ENCODE measurements at regions of chr1 and their contacts with region 1.

Region 1: DNA sequence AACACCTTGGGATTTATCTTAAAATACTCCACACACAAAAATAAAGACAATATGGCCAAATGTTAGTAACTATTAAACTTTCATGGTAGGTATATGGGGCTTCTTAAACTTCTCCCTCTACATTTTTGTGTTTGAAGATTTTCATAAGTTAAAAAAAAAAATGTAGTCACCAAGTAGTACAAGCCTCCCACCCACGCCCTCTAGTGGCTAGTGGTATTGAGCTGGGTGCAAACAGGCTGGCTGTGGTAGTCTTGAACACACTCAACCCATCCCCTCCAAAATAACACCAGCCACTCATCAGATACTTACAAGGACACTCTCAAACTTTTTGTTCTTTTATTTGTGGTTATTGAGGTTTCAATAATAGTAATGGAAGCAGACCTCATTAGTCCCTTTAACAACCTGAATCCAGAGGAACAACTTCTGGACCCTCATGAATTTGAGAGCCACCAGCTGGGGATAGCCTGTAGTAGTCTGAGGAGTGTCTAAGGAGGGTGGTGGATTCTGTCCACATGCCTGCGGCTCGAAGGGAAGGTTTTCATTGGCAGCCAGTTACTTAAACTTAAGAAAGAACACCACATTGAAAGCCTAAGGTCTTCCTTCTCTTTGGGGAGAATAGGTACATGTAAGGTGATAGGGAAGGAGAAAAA is 15.6 kb downstream of the RD3 start:
- DNase-seq: peak; percentile 39
- ATAC-seq: peak; percentile 72
- H3K4me3 Mint-ChIP-seq: no peak overlapping the region
- H3K27ac Mint-ChIP-seq: no peak overlapping the region
- H3K4me1 Mint-ChIP-seq: peaks cover 2% of the 10 kb centered on the region
- H3K27me3 Mint-ChIP-seq: peaks cover 27% of the 10 kb centered on the region
- CTCF ChIP-seq: peak; percentile 56

Region 2: GRCh38 chr1:210448297-210448892 is 1027.9 kb before region 1 on chr1:
- CTCF ChIA-PET with region 1: no interaction called
- POLR2A ChIA-PET with region 1: no interaction called
- intact Hi-C with region 1: loop called (anchors 1 kb)
- DNase-seq: no peak
- ATAC-seq: no peak
- H3K4me3 Mint-ChIP-seq: no peak overlapping the region
- H3K27ac Mint-ChIP-seq: no peak overlapping the region
- H3K4me1 Mint-ChIP-seq: peaks cover 7% of the 10 kb centered on the region
- H3K27me3 Mint-ChIP-seq: no peaks in the 10 kb centered on the region
- CTCF ChIP-seq: no peak

Region 3: DNA sequence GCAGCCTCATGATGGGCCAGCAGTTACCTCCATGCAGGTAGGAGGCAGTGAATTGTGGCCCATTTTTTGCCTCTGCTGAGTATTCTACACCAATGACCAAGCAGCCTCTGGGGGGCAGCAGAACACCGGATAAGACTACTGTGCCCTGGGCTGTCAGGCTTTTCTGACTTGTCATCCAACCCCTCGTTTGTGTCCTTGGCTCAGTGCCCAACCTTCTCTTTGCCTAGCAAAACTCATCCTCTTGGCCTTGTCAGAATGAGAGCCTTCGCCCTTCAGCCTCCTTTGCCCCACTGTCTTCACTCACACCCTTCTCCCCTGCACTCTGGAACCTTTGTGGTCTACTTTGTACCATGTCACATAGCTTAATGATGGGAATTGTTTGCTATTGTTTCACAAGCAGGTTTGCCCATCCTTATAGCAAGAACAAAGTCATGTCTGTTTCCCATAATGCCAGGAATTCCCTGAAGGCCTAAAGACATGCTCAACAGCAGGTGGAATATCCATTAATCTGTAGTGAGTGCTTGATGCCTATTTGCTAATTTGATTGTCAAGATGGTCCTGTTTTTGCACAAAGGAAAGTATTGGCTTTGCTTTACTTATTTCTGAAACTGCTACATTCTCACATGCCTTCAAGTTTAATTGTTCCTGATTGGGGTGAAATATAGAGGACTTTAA is 891.7 kb before region 1 on chr1:
- CTCF ChIA-PET with region 1: interaction called, 4 read pairs
- POLR2A ChIA-PET with region 1: no interaction called
- intact Hi-C with region 1: loop called (anchors 1 kb)
- DNase-seq: peak; percentile 34
- ATAC-seq: peak; percentile 37
- H3K4me3 Mint-ChIP-seq: no peak overlapping the region
- H3K27ac Mint-ChIP-seq: no peak overlapping the region
- H3K4me1 Mint-ChIP-seq: peaks cover 10% of the 10 kb centered on the region
- H3K27me3 Mint-ChIP-seq: no peaks in the 10 kb centered on the region
- CTCF ChIP-seq: no peak

Region 4: DNA sequence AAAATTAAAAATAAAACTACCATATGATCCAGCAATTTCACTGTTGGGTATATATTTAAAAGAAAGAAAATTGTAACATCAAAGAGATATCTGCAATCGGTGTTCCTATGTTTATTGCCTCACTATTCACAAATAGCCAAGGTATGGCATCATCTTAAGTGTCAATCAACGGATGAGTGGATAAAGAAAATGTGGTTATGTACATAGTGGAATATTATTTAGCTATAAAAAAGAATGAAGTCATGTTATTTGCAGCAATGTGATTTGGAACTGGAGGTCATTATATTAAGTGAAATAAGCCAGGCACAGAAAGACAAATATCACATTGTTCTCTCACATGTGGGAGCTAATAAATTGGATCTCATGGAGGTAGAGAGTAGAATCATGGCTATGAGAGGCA is 60.6 kb before region 1 on chr1:
- CTCF ChIA-PET with region 1: no interaction called
- POLR2A ChIA-PET with region 1: no interaction called
- intact Hi-C with region 1: loop called (anchors 5 kb)
- DNase-seq: no peak
- ATAC-seq: no peak
- H3K4me3 Mint-ChIP-seq: peak overlapping the region; percentile 66
- H3K27ac Mint-ChIP-seq: peak overlapping the region; percentile 25
- H3K4me1 Mint-ChIP-seq: peaks cover 10% of the 10 kb centered on the region
- H3K27me3 Mint-ChIP-seq: no peaks in the 10 kb centered on the region
- CTCF ChIP-seq: no peak

Region 5: DNA sequence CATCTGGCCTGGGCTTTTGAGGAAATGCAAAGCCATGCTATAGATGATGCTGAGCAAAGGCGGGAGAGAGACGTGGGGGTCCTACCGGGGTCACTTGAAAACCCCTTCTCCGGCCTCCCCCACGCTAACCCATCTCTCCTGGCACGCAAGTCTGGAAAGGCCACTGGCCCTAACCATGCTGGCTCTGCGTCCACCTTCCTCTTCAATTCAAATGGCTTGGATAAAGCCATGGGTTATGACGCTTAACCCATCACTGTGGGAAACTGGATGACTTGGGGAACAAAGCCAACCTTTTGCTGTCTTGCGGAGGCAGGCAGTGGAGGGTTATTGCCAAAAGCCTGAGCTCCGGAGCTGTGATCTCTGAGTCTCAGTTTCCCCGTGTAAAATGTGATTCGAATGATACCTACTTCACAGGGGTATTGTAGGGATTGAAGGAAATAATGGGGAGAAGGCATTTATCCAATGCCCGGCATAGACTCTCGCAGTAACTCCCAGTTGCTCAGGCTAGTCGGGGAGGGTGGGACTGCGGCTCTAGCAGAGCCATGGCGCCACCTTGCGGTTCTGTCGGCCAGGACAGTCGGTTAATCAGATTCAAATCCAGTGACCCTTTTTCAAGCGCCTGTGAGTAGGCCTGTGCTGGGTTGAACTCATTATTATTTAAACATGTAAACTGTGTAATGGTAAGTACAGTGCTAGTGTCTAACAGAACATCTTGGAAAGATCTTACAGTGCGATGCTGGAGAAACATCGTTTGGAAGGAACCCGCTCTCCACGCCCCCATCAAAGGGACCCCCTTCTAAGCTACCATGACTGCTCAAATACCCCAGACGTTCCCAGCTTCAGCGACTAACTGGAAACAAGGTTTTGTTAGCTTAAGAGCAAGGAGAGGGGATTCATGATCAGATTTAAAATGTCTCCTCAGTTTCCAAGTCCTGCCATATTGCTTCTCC is 178.8 kb after region 1 on chr1:
- CTCF ChIA-PET with region 1: interaction called, 4 read pairs
- POLR2A ChIA-PET with region 1: no interaction called
- intact Hi-C with region 1: loop called (anchors 1 kb)
- DNase-seq: peak; percentile 70
- ATAC-seq: peak; percentile 91
- H3K4me3 Mint-ChIP-seq: no peak overlapping the region
- H3K27ac Mint-ChIP-seq: no peak overlapping the region
- H3K4me1 Mint-ChIP-seq: peaks cover 4% of the 10 kb centered on the region
- H3K27me3 Mint-ChIP-seq: no peaks in the 10 kb centered on the region
- CTCF ChIP-seq: peak; percentile 33

Measured in activated B cell treated with CpG ODN at 0.5 μM for 24 hours (primary cell).